ENCODE measurements at regions of chr1 and their contacts with region 1.

Region 1: GRCh38 chr1:20633190-20634064 is at the start of gene PINK1:
- DNase-seq: peak; percentile 86
- ATAC-seq: peak; percentile 90
- H3K4me3 ChIP-seq: peak within 1 kb of the TSS; percentile 74 to 90 (median 77)
- H3K27ac ChIP-seq: peak within 1 kb of the TSS; percentile 75
- H3K4me1 ChIP-seq: peaks cover 22% of the 10 kb centered on the region
- H3K27me3 ChIP-seq: no peaks in the 10 kb centered on the region
- CTCF ChIP-seq: peak; percentile 94
- EP300 ChIP-seq: peak; percentile 32 to 55; a peak in 2 of 4 replicates
- POLR2A ChIP-seq: peak in 1 of 2 experiments; percentile 39; a peak in 1 of 4 replicates
- RAD21 ChIP-seq: peak; percentile 92
- total RNA-seq, gene PINK1: 13.1 and 15.3 TPM in 2 replicates

Region 2: GRCh38 chr1:20499105-20499504 is 134.3 kb before region 1 on chr1:
- CTCF ChIA-PET with region 1: no interaction called
- POLR2A ChIA-PET with region 1: no interaction called
- in situ Hi-C with region 1: no loop called
- intact Hi-C with region 1: no loop called
- DNase-seq: no peak
- ATAC-seq: no peak
- H3K4me3 ChIP-seq: no peak overlapping the region
- H3K27ac ChIP-seq: no peak overlapping the region
- H3K4me1 ChIP-seq: peaks cover 19% of the 10 kb centered on the region
- H3K27me3 ChIP-seq: no peaks in the 10 kb centered on the region
- CTCF ChIP-seq: no peak
- EP300 ChIP-seq: no peak
- POLR2A ChIP-seq: no peak
- RAD21 ChIP-seq: no peak

Region 3: GRCh38 chr1:20521960-20522861 is 111.2 kb before region 1 on chr1:
- CTCF ChIA-PET with region 1: interaction called, 23 read pairs
- POLR2A ChIA-PET with region 1: no interaction called
- in situ Hi-C with region 1: no loop called
- intact Hi-C with region 1: loop called (anchors 1 kb)
- DNase-seq: peak; percentile 57
- ATAC-seq: peak; percentile 54
- H3K4me3 ChIP-seq: no peak overlapping the region
- H3K27ac ChIP-seq: no peak overlapping the region
- H3K4me1 ChIP-seq: peaks cover 5% of the 10 kb centered on the region
- H3K27me3 ChIP-seq: 0 out of 5 replicates have a peak, but pooled peaks cover 0 to 2% of the 10 kb centered on the region in 2 experiments
- CTCF ChIP-seq: peak; percentile 93
- EP300 ChIP-seq: no peak
- POLR2A ChIP-seq: no peak
- RAD21 ChIP-seq: peak; percentile 86

Region 4: DNA sequence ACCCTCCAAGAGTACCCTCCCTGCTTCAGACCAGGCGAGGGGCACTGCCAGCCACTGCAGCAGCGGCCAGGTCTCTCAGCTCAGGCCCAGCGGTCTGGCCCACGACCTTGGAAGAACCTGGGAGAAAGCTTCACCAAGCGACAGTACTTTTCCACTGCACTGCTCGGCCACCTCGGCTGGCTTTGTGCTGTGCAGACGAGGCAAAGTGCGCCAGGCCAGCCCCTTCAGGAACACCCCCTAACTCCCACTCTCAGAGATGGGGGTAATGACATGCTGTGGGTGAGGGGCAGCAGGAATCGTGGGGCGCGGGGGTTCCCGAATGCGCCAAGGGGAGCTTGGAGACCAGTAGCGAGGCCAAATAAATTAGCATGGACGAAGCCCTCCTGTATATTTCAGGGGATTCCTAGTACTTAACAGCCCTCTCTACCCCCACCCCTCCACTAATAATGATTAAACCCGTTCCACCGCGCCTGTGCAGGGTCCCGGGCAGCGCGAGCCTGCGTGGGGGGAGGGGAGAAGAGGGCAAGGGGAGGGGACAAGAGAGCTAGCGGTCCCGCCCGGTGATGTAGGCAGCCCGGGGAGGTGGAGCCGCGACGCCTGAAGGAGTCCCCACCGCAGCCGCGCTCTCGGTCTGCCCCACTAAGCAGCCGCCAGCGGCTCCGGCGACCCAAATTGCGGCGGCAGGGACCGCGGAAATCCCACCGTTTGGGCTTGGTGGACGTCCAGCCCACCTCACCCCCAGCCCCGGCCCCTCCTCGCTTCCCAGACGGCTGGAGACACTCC is 81.3 kb before region 1 on chr1 and contains the start of gene FAM43B:
- CTCF ChIA-PET with region 1: no interaction called
- POLR2A ChIA-PET with region 1: interaction called, 45 read pairs
- in situ Hi-C with region 1: no loop called
- intact Hi-C with region 1: no loop called
- DNase-seq: peak; percentile 88
- ATAC-seq: peak; percentile 93
- H3K4me3 ChIP-seq: peak within 1 kb of the TSS; percentile 57 to 81 (median 75)
- H3K27ac ChIP-seq: peak within 1 kb of the TSS; percentile 95
- H3K4me1 ChIP-seq: peaks cover 34% of the 10 kb centered on the region
- H3K27me3 ChIP-seq: no peaks in the 10 kb centered on the region
- CTCF ChIP-seq: no peak
- EP300 ChIP-seq: peak in 1 of 2 experiments; percentile 46; a peak in 1 of 4 replicates
- POLR2A ChIP-seq: peak; percentile 95 to 96
- RAD21 ChIP-seq: no peak
- total RNA-seq, gene FAM43B: 3.2 and 3.7 TPM in 2 replicates

Region 5: DNA sequence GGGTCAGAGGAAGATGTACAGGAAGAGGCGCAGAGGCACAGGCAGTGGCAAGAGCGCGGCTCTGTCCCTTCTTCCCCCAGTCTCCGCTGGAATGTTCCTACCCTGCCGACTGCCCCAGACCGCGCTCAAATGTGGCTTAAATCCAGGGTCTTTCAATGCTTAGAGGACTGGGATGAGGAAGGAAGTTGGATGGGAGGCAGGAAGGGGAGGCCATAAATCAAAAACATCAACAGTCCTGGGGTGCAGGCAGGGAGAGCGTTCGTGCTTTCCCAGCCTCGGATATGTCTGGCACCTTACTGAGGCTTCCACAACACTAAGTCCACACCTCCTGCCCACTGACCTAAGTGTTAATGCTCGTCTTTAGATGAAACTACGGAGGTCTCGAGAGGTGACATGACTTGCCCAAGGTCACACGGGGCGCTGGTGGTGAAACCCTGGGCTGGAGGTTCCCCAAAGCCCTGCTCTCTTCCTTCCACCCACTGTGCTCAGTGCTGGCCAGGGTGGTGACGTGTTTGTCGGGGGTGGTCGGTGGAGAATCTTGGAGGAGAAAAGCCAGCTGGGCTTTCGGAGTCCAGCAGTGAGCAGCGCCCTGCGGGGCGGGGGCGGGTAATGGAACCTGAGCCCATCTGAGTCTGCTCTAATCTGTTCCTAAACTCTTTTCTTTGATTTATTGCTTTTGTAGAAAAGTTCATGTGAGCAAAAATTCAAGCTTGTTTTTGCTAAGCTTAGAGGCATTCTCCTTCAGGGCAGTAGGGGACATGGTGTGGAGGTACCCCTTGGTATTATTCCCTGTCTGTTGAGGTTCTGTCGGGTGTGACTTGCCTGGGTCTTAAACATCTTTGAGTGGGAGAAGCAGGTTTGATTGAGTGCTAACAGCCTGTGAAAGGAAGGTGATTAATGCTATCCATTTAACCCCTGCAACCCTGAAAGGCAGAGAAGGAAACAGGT is 43.8 kb before region 1 on chr1:
- CTCF ChIA-PET with region 1: no interaction called
- POLR2A ChIA-PET with region 1: interaction called, 23 read pairs
- in situ Hi-C with region 1: no loop called
- intact Hi-C with region 1: no loop called
- DNase-seq: no peak
- ATAC-seq: peak; percentile 57
- H3K4me3 ChIP-seq: peak overlapping the region in 2 of 3 experiments; percentile 42 to 52; a peak in 3 of 6 replicates
- H3K27ac ChIP-seq: no peak overlapping the region
- H3K4me1 ChIP-seq: peaks cover 34% of the 10 kb centered on the region
- H3K27me3 ChIP-seq: peaks cover 1 to 15% of the 10 kb centered on the region in 2 experiments; a peak in 3 of 5 replicates
- CTCF ChIP-seq: no peak
- EP300 ChIP-seq: no peak
- POLR2A ChIP-seq: no peak
- RAD21 ChIP-seq: no peak

Region 6: GRCh38 chr1:20661207-20662109 is 28.0 kb after region 1 on chr1 and contains the start of gene DDOST:
- CTCF ChIA-PET with region 1: no interaction called
- POLR2A ChIA-PET with region 1: interaction called, 24 read pairs
- in situ Hi-C with region 1: no loop called
- intact Hi-C with region 1: no loop called
- DNase-seq: peak; percentile 98
- ATAC-seq: peak; percentile 95
- H3K4me3 ChIP-seq: peak within 1 kb of the TSS; percentile 77 to 98 (median 89)
- H3K27ac ChIP-seq: peak within 1 kb of the TSS; percentile 66
- H3K4me1 ChIP-seq: peaks cover 47% of the 10 kb centered on the region
- H3K27me3 ChIP-seq: no peaks in the 10 kb centered on the region; a peak in 1 of 5 replicates
- CTCF ChIP-seq: peak; percentile 76
- EP300 ChIP-seq: no peak
- POLR2A ChIP-seq: peak; percentile 62 to 84; a peak in 3 of 4 replicates
- RAD21 ChIP-seq: no peak
- total RNA-seq, gene DDOST: 167 and 335 TPM in 2 replicates